ENCODE measurements at regions of chr6 and their contacts with region 1.

Region 1: DNA sequence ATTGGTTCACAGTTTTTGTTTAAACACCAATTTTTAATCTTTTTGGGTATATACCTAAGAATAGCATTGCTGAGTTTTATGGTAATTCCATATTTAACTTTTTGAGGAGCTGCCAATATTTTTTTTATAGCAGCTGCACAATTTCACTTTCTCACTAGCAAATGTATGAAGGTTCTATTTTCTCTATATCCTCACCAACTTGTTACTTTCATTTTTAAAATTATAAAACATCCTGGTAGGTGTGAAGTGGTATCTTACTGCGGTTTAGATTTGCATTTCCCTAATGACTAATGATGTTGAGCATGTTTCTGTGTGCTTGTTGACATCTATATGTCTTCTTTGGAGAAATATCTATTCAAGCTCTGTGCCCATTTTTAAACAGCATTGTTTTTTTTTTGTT is 452.1 kb downstream of the GRIK2 start:
- DNase-seq: no peak
- H3K4me3 Mint-ChIP-seq: no peak overlapping the region
- H3K27ac Mint-ChIP-seq: no peak overlapping the region
- H3K4me1 Mint-ChIP-seq: no peaks in the 10 kb centered on the region
- H3K27me3 Mint-ChIP-seq: no peaks in the 10 kb centered on the region
- CTCF ChIP-seq: no peak

Region 2: DNA sequence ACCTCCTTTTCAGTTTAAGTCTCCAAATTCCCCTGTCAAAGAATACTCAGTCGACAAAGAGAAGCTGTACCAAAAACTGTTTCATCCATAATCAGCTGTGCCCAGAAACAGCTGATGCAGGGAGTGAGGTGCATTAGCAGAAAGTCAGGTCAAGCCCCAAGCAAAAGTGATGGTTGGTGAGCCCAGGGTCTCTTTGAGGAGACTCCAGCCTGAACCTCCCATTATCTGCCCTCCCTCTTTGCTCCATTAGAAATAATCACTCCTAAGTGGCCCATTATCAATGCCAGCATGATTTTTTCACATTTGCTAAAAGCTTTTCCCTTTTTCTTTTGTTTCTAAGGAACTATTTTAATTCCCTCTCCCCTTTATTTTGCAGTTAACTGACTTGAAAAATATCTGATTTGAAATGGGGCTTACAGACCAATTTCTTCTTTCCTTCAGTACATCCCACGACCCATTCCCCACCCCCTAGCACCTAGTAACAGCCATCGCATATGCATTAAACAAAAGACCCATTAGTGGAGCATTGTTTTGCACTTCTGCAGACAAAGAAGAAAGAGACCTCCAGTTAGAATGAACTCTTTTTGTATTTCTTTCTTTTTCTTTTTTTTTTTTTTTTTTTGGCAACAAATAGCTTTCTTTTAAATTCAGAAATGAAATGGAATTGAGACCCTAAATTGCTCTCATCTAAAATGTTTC is 195.1 kb before region 1 on chr6:
- CTCF ChIA-PET with region 1: no interaction called
- intact Hi-C with region 1: no loop called
- DNase-seq: no peak
- H3K4me3 Mint-ChIP-seq: no peak overlapping the region
- H3K27ac Mint-ChIP-seq: no peak overlapping the region
- H3K4me1 Mint-ChIP-seq: no peaks in the 10 kb centered on the region
- H3K27me3 Mint-ChIP-seq: no peaks in the 10 kb centered on the region
- CTCF ChIP-seq: no peak

Region 3: GRCh38 chr6:102619585-102619984 is 774.0 kb after region 1 on chr6:
- CTCF ChIA-PET with region 1: no interaction called
- intact Hi-C with region 1: loop called (anchors 10 kb)
- DNase-seq: no peak
- H3K4me3 Mint-ChIP-seq: no peak overlapping the region
- H3K27ac Mint-ChIP-seq: no peak overlapping the region
- H3K4me1 Mint-ChIP-seq: no peaks in the 10 kb centered on the region
- H3K27me3 Mint-ChIP-seq: no peaks in the 10 kb centered on the region
- CTCF ChIP-seq: peak; percentile 31

Measured in Calu3 (cell line).